Sciatic nerve (tissue), 2 donors: ENCODE measurements at regions of chr4 and their contacts with region 1.

Region 1: DNA sequence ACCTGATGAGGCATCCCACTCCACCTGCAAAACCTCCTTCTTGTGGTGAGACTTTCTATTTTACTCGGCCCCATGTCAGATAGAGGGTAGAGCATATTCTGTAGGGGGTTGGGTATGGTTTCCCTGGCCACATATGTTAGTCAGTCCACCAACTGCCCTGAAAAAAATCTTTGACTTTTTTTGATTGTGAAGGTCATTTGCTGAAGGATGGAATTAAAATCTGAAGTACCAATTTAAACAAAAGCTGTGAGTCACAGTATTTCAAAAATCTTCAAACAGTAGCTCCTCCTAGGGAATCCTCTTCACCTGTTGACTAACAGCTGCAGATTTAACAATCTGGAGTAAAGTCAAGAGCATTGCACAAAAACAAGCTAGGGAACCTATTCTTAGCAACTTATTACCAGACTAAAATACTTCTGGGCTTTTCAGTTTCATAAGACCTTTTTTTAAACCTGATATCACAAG is 8.0 kb upstream of the CCDC110 start:
- DNase-seq: no peak
- ATAC-seq: no peak

Region 2: DNA sequence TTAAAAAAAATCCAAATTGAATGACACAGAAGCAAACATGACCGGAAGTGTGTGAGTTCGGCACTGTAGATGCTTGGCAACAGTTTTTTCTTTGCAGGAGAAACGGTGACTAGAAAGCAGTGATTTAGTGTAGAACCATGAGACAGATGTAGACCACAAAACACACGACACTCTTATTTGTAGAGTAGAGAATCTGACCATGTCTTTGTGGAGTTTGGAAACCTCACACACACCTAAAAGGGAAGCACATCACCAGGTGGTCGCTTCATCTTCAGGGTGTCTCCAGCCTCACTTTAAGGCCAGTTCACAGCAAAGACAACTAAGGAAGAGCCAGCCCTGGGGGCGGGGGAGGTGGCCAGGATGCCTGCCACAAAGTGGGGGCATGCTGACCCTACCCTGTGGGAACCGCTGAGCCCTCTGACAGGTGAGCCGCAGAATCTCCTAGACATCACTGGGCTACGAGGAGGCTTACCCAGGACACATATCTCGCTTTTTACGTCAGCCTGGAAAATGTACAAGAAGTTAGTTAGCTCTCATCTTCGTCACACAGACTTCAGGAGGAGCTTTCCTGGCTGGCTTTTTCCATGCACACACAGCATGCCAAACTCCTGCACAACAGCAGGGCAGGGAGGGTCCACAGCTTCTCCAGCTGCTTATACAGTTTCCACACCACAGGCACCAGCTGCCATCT is 120.2 kb after region 1 on chr4:
- intact Hi-C with region 1: loop called (anchors 5 kb)
- DNase-seq: no peak
- ATAC-seq: no peak